Mammary epithelial cell (primary cell): ENCODE measurements at regions of chr7 and their contacts with region 1.

Region 1: DNA sequence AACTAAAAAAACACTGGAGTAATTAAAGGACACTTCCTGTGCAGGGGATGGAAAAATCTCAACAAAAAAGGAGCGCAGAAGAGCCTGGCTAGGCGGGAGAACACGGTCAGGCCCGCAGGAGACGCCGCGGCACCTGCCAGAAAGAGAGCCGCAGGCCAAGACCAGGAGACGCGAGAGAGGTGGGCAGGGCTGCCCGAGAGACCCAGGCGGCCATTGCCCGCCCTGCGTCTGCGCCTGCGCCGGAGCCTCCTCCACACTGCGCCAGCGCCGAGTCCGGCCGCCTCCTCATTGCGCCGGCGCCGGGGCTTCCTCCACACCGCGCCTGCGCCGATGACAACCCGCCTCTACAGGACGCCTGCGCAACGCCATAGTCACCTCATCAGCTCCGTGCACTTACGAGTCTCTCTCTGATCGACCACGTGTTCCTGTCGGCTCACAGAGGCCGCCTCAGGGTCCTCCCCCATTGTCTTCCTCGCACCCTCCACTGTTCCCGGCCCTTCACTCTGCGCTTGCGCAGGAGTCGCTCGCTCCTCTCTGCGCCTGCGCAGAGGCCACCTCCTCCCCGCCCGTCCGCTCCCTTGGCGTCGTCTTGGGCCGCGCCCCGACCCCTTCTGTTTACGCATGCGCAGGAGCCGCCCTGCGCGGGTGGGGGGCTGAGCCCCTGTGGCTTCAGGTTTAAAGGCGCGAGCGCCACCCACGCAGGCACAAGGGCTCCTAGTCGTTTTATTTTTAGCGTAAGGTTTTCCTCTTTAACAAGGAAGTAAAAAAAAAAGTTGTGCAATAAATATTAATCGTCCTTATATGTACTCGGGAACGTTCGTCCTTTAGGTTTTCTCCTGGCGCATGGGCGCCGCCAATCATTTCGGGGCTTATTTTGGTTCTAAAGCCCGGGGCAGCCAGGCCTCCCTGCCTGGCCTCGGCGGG is 43.2 kb upstream of the FAM20C start:
- DNase-seq: peak; percentile 98
- H3K4me3 ChIP-seq: peak overlapping the region; percentile 74 to 85 (median 75)
- H3K27ac ChIP-seq: peak overlapping the region; percentile 72
- H3K4me1 ChIP-seq: peaks cover 10% of the 10 kb centered on the region
- H3K27me3 ChIP-seq: no peaks in the 10 kb centered on the region
- CTCF ChIP-seq: no peak

Region 2: GRCh38 chr7:101146-102046 is 47.8 kb before region 1 on chr7:
- CTCF ChIA-PET with region 1: no interaction called
- dilution Hi-C with region 1: no loop called
- in situ Hi-C with region 1: no loop called
- intact Hi-C with region 1: loop called (anchors 5 kb)
- DNase-seq: peak; percentile 76
- H3K4me3 ChIP-seq: no peak overlapping the region
- H3K27ac ChIP-seq: no peak overlapping the region
- H3K4me1 ChIP-seq: peaks cover 20% of the 10 kb centered on the region
- H3K27me3 ChIP-seq: no peaks in the 10 kb centered on the region
- CTCF ChIP-seq: no peak

Region 3: GRCh38 chr7:191981-192649 is 42.9 kb after region 1 on chr7 and contains the start of gene FAM20C:
- CTCF ChIA-PET with region 1: no interaction called
- dilution Hi-C with region 1: no loop called
- in situ Hi-C with region 1: no loop called
- intact Hi-C with region 1: loop called (anchors 2 kb)
- DNase-seq: peak; percentile 81
- H3K4me3 ChIP-seq: peak within 1 kb of the TSS; percentile 66 to 76 (median 68)
- H3K27ac ChIP-seq: no peak within 1 kb of the TSS
- H3K4me1 ChIP-seq: peaks cover 27% of the 10 kb centered on the region
- H3K27me3 ChIP-seq: no peaks in the 10 kb centered on the region
- CTCF ChIP-seq: no peak
- total RNA-seq, gene FAM20C: 37.0 to 48.5 TPM

Region 4: DNA sequence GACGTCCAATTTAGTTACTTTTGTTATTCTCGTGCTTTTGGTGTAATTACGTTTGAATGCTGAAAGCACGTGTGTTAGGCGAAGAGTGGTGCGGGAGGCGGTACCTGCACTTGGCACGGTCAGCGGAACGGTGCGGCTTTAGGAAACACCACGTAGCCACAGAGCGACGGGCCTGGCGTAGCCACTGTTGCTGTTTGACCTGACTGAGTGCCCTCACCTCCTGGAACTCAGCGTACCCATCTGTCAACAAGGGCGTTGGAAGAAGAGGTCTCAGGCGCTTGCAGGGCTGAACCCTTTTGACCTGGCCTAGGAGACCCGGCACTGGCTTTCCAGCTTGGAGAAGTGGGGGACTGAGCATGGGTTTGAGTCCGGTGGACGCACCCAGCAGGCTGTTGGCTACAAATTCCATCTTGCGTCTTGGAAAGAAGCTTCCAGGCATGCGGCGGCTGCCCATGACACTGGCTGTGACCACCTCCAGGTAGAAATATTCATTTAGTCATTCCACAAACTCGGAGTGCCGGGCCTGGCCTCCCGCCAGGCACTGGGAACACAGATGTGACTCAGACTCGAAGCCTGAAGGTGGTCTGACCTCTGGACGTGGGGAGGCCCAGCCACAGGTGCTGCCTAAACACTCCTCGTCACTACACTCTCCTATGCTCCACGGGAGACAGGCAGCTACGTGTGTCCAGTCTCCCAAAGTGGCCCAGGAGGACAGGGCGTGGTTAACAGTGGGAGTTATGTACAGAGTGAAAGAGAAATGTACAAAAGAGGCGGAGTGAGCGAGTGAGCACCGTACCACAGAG is 65.4 kb after region 1 on chr7:
- CTCF ChIA-PET with region 1: no interaction called
- dilution Hi-C with region 1: loop called (anchors 5 kb)
- in situ Hi-C with region 1: no loop called
- intact Hi-C with region 1: no loop called
- DNase-seq: peak; percentile 76
- H3K4me3 ChIP-seq: no peak overlapping the region
- H3K27ac ChIP-seq: no peak overlapping the region
- H3K4me1 ChIP-seq: peaks cover 16% of the 10 kb centered on the region
- H3K27me3 ChIP-seq: no peaks in the 10 kb centered on the region
- CTCF ChIP-seq: no peak

Region 5: GRCh38 chr7:945556-946255 is 796.5 kb after region 1 on chr7:
- CTCF ChIA-PET with region 1: no interaction called
- dilution Hi-C with region 1: no loop called
- in situ Hi-C with region 1: no loop called
- intact Hi-C with region 1: no loop called
- DNase-seq: peak; percentile 98
- H3K4me3 ChIP-seq: peak overlapping the region in 2 of 3 experiments; percentile 11 to 31
- H3K27ac ChIP-seq: peak overlapping the region; percentile 69
- H3K4me1 ChIP-seq: peaks cover 34% of the 10 kb centered on the region
- H3K27me3 ChIP-seq: no peaks in the 10 kb centered on the region
- CTCF ChIP-seq: no peak